ENCODE measurements at regions of chr19 and their contacts with region 1.

Region 1: GRCh38 chr19:40750059-40750873 is at the start of gene ACTMAP:
- DNase-seq: peak; percentile 100
- ATAC-seq: peak; percentile 88 to 92
- H3K4me3 ChIP-seq: peak within 1 kb of the TSS; percentile 66
- H3K27ac ChIP-seq: peak within 1 kb of the TSS; percentile 91
- H3K4me1 ChIP-seq: peaks cover 51% of the 10 kb centered on the region
- CTCF ChIP-seq: no peak
- EP300 ChIP-seq: no peak
- POLR2A ChIP-seq: peak; percentile 52; the same call in 1 of the 2 replicates
- RAD21 ChIP-seq: no peak
- polyA plus RNA-seq, gene ACTMAP: 7.8 and 11.7 TPM in 2 replicates

Region 2: GRCh38 chr19:40542202-40542859 is 207.9 kb before region 1 on chr19:
- CTCF ChIA-PET with region 1: no interaction called
- POLR2A ChIA-PET with region 1: no interaction called
- DNase-seq: no peak
- ATAC-seq: no peak
- H3K4me3 ChIP-seq: no peak overlapping the region
- H3K27ac ChIP-seq: no peak overlapping the region
- H3K4me1 ChIP-seq: no peaks in the 10 kb centered on the region
- CTCF ChIP-seq: no peak
- EP300 ChIP-seq: no peak
- POLR2A ChIP-seq: no peak
- RAD21 ChIP-seq: no peak

Region 3: DNA sequence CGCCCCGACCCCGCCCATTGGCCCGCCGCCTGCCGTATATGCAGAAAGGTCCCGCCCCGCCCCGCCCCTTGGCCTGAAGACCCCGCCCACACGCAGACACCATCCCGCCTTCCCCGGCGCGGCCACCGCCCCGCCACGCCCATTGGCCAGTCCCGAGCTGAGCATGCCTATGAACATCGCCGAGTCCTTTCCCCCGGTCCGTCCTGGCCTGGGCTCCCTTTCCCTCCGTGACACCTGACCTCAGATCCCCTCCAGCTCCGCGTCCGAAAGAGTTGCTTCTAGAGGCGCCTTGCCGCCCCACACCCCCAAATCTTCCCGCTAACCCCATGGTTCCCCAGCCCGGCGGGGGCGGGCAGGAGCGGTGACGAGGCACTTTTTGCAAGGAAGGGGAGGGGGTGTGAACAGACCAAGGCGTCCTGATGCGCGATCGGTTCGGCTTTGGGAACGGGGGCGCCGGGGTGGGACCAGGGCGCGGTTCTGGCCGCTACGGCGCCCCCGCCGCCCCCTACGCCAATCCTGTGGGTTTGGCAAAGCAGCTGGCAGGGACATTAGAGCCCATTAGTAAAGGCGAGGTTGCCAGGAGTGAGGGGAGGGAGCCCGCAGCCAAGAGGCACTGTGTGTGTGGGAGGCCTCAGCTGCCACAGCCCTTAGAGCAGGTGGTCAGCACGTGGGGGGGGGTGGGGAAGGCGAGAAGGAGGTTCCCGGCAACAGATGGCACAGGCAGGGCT is 59.4 kb before region 1 on chr19:
- CTCF ChIA-PET with region 1: interaction called, 4 read pairs
- POLR2A ChIA-PET with region 1: interaction called, 17 read pairs
- DNase-seq: peak; percentile 98 to 100
- ATAC-seq: peak; percentile 60 to 89
- H3K4me3 ChIP-seq: peak overlapping the region; percentile 73
- H3K27ac ChIP-seq: peak overlapping the region; percentile 93 to 99
- H3K4me1 ChIP-seq: peaks cover 42% of the 10 kb centered on the region
- CTCF ChIP-seq: no peak
- EP300 ChIP-seq: peak in 1 of 2 experiments; percentile 20; a peak in 1 of 5 replicates
- POLR2A ChIP-seq: peak; percentile 79
- RAD21 ChIP-seq: no peak; a peak in 1 of 5 replicates

Region 4: DNA sequence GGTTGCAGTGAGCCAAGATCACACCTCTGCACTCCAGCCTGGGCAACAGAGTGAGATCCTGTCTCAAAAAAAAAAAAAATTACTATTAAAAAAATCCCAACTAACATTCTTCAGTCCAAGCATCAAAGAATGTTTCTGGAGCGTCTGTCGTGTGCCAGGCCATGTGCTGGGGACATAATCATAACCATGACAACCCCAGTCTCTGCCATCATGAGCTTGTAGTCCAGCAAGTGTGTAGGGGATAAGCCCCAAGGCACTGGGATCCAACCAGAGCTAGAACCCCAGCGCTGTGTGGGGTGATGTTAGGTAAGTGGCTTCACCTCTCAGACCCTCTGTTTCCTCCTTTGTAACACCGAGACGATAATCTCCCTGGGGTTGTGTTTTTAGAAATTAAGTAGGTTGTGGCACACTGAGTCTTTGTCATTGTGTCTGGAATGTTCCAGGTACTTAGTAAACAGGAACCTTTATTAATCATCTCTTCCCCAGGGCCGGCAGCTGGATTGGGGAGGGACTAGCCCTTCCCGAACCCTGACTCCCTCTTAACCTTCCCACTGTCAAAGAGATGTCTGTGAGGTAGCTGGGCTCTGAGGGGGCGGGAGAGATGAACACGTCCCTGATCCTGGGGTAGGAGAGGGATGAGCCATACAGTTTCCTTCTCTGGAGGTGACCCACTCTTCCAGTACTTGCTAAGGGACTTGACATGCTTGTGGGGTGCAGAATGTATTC is 28.2 kb before region 1 on chr19:
- CTCF ChIA-PET with region 1: interaction called, 199 read pairs
- POLR2A ChIA-PET with region 1: interaction called, 71 read pairs
- DNase-seq: no peak
- ATAC-seq: no peak
- H3K4me3 ChIP-seq: no peak overlapping the region
- H3K27ac ChIP-seq: peak overlapping the region in 1 of 2 experiments; percentile 12; a peak in 1 of 6 replicates
- H3K4me1 ChIP-seq: peaks cover 33% of the 10 kb centered on the region
- CTCF ChIP-seq: no peak
- EP300 ChIP-seq: no peak
- POLR2A ChIP-seq: no peak
- RAD21 ChIP-seq: no peak

Region 5: GRCh38 chr19:40762754-40763470 is 12.6 kb after region 1 on chr19:
- CTCF ChIA-PET with region 1: interaction called, 22 read pairs
- POLR2A ChIA-PET with region 1: interaction called, 7 read pairs
- DNase-seq: no peak
- ATAC-seq: no peak
- H3K4me3 ChIP-seq: no peak overlapping the region
- H3K27ac ChIP-seq: no peak overlapping the region
- H3K4me1 ChIP-seq: no peaks in the 10 kb centered on the region
- CTCF ChIP-seq: no peak
- EP300 ChIP-seq: no peak
- POLR2A ChIP-seq: no peak
- RAD21 ChIP-seq: no peak

Region 6: GRCh38 chr19:40806488-40807468 is 56.5 kb after region 1 on chr19:
- CTCF ChIA-PET with region 1: interaction called, 14 read pairs
- POLR2A ChIA-PET with region 1: interaction called, 7 read pairs
- DNase-seq: peak; percentile 90 to 100
- ATAC-seq: peak; percentile 58 to 81
- H3K4me3 ChIP-seq: no peak overlapping the region
- H3K27ac ChIP-seq: no peak overlapping the region
- H3K4me1 ChIP-seq: peaks cover 43% of the 10 kb centered on the region
- CTCF ChIP-seq: peak; percentile 78
- EP300 ChIP-seq: no peak
- POLR2A ChIP-seq: no peak
- RAD21 ChIP-seq: peak; percentile 62 to 63

Region 7: DNA sequence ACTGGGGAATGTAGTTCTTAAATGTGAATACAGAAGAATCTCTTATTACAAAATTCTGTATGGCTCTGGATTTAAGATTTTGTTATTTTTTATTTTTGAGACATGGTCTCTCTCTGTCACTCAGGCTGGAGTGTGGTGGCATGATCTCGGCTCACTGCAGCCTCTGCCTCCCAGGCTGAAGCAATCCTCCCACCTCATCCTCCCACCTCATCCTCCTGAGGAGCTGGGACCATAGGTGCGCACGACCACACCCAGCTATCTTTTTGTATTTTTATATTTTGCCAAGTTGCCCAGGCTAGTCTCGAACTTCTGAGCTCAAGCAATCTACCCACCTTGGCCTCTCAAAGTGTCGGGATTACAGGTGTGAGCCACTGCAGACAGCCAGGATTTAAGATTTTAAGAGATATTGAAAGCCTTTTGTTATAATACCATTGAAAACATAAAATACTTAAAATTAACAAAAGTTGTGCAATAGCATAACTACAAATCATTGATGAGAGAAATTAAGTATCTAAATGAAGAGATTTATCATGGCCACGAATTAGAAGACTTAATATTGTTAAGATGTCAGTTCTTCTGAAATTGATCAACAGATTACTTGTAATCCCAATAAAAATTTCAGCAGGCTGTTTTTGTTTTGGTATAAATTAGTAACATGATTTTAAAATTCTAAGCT is 86.6 kb after region 1 on chr19:
- CTCF ChIA-PET with region 1: no interaction called
- POLR2A ChIA-PET with region 1: no interaction called
- DNase-seq: no peak
- ATAC-seq: no peak
- H3K4me3 ChIP-seq: no peak overlapping the region
- H3K27ac ChIP-seq: no peak overlapping the region
- H3K4me1 ChIP-seq: peaks cover 12% of the 10 kb centered on the region
- CTCF ChIP-seq: no peak
- EP300 ChIP-seq: no peak
- POLR2A ChIP-seq: no peak
- RAD21 ChIP-seq: no peak

Measured in A549 (cell line).